GM10248 (cell line): ENCODE measurements at regions of chr1 and their contacts with region 1.

Region 1: GRCh38 chr1:19811206-19811851 is 3.8 kb downstream of the RNF186 start:
- DNase-seq: peak; percentile 75
- CTCF ChIP-seq: peak; percentile 81

Region 2: DNA sequence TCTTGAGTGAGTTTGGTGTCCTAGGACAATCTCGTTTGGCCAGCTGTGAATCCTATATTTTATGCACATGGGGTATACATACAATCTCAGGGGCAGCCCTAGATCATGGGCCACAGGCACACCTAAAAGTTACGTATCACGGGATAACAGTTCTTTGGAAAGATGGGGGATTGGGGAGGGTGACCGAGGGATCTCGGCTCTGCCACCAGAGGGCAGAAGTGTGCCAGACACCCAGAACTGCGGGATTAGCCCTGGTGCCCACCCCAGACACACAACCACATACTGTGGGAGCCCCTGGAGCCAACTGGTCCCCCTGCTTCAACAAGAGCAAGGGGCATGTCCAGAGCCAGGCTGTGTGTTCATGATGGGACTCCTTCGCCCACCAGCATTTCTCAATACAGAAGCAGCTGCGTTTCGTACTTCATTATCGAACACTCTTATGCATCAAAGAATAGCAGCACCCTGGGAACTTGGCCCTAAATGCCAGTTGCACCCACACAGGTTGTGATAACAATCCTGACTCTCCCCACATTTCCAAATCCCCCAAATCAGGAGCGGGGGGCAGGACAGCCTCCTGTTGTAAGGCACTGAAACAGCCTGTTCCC is 49.1 kb before region 1 on chr1:
- CTCF ChIA-PET with region 1: interaction called, 10 read pairs
- POLR2A ChIA-PET with region 1: no interaction called
- DNase-seq: peak; percentile 65
- CTCF ChIP-seq: peak; percentile 78

Region 3: GRCh38 chr1:19799877-19800804 is 11.2 kb before region 1 on chr1 and contains the start of gene TMCO4:
- CTCF ChIA-PET with region 1: interaction called, 16 read pairs
- POLR2A ChIA-PET with region 1: no interaction called
- DNase-seq: peak; percentile 79
- CTCF ChIP-seq: no peak

Region 4: DNA sequence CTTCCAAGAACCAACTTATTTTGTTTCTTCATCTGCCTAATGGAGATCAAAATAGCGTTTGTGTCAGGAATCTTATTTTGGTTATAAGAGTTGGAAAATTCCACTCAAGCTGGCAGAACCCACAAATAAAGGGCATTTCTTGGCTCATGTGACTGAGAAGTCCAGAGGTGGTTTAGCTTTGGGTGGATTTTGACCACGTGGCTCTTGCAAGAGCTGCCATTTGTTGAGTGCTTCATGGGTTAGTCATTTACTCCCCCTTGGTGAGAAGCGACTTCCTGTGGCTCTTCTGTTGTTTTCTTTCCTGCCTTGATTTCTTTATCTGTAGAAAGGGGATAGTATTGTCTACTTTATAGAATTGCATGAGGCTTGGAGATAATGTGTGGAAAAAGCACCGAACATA is 13.2 kb after region 1 on chr1:
- CTCF ChIA-PET with region 1: interaction called, 16 read pairs
- POLR2A ChIA-PET with region 1: no interaction called
- DNase-seq: no peak
- CTCF ChIP-seq: no peak

Region 5: GRCh38 chr1:19861034-19861433 is 49.7 kb after region 1 on chr1:
- CTCF ChIA-PET with region 1: no interaction called
- POLR2A ChIA-PET with region 1: no interaction called
- DNase-seq: no peak
- CTCF ChIP-seq: no peak

Region 6: GRCh38 chr1:19957779-19958178 is 146.4 kb after region 1 on chr1:
- CTCF ChIA-PET with region 1: no interaction called
- POLR2A ChIA-PET with region 1: no interaction called
- DNase-seq: no peak
- CTCF ChIP-seq: no peak